Panc1 (cell line): ENCODE measurements at regions of chr22 and their contacts with region 1.

Region 1: GRCh38 chr22:35430897-35431322 is 31.0 kb downstream of the MCM5 start:
- DNase-seq: peak; percentile 35
- ATAC-seq: peak; percentile 96
- H3K4me3 ChIP-seq: no peak overlapping the region
- H3K27ac ChIP-seq: peak overlapping the region; percentile 89
- H3K4me1 ChIP-seq: peaks cover 18% of the 10 kb centered on the region
- H3K27me3 ChIP-seq: no peaks in the 10 kb centered on the region
- CTCF ChIP-seq: peak; percentile 89

Region 2: DNA sequence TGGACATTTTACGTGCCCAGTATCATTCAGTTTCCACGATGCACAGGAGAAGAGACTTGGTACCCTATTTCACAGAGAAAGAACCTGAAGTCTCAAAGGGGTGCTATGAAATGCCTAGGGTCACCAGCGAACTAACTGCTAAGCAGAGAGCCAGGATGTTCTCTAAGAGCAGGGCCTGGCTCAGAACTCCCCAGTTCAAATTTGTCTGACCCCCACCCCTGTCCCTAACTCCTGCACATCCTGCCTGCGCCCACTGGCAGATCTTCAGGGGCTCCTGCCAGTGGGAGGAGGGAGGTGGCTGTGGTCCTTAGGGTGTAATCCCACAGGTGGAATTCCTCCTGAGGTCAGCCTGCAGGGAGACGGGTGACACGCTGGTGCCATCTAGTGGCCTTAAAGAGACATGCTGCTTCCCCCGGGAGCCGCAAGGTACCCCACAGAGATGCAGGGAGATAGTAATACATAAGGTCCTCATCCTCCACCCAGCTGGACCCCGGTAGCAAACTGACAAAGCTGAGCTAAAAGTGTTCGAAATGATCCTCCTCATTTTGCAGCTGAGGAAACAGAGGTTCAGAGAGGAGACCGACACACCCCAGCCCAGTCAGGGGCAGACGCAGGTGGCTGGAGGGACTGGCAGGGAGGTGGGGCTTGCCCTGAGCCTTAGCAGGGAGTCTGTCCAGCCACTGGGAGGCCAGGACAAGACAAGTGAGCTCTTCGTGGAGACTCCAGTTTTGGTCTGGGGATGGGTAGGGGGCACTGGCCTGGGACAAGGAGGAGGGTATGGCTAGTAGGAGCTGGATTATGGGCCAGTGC is 152.2 kb after region 1 on chr22:
- CTCF ChIA-PET with region 1: interaction called, 11 read pairs
- POLR2A ChIA-PET with region 1: no interaction called
- in situ Hi-C with region 1: no loop called
- intact Hi-C with region 1: loop called (anchors 2 kb)
- DNase-seq: peak; percentile 48
- ATAC-seq: peak; percentile 85
- H3K4me3 ChIP-seq: no peak overlapping the region
- H3K27ac ChIP-seq: peak overlapping the region; percentile 99
- H3K4me1 ChIP-seq: peaks cover 38% of the 10 kb centered on the region
- H3K27me3 ChIP-seq: no peaks in the 10 kb centered on the region
- CTCF ChIP-seq: peak; percentile 91

Region 3: DNA sequence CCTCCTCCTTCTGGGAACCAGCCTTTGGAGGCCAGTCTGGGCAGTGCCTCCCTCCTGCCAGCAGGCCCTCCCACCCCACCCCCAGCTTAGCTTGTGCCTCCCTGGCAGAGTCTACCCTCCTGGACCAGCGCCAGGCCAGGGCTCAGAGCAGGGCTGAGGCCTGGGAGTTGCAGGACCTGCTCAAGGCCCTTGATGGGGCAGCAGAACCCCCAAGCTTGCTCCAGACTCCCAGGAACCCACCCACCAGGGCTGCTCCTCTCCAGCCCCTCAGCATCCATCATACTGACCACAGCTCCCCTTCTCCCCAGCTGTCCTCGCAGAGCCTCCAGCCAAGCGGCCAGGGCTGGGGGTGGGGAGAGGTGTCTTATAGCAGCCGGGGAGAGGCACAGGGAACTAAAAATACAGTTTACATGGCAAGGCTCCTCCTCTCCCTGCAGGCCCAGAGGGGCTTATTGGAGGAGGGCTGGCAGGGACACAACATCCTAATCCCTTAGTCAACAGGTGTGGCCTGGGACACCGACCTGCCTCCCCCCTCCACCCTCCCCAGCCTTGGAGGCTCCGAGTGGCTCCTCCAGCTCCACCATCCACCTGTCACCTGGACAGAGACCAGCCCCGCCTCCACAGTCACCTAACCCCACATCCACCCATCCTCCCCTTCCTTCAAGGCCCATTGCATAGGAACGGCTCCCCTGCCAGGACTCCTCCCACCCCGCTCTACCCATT is 191.4 kb after region 1 on chr22:
- CTCF ChIA-PET with region 1: interaction called, 10 read pairs
- POLR2A ChIA-PET with region 1: no interaction called
- in situ Hi-C with region 1: no loop called
- intact Hi-C with region 1: loop called (anchors 2 kb)
- DNase-seq: no peak
- ATAC-seq: peak; percentile 66
- H3K4me3 ChIP-seq: no peak overlapping the region
- H3K27ac ChIP-seq: peak overlapping the region; percentile 97
- H3K4me1 ChIP-seq: peaks cover 43% of the 10 kb centered on the region
- H3K27me3 ChIP-seq: no peaks in the 10 kb centered on the region
- CTCF ChIP-seq: no peak